ENCODE measurements at regions of chr2 and their contacts with region 1.

Region 1: GRCh38 chr2:151828143-151828889 is at the start of gene ARL5A:
- DNase-seq: peak; percentile 79 to 98
- H3K4me3 ChIP-seq: peak within 1 kb of the TSS; percentile 96
- H3K27ac ChIP-seq: peak within 1 kb of the TSS; percentile 89 to 96
- H3K4me1 ChIP-seq: peaks cover 0 to 13% of the 10 kb centered on the region in 2 donors
- H3K27me3 ChIP-seq: no peaks in the 10 kb centered on the region
- CTCF ChIP-seq: no peak
- total RNA-seq, gene ARL5A: 15.8 TPM

Region 2: GRCh38 chr2:151774506-151774905 is 53.8 kb before region 1 on chr2:
- intact Hi-C with region 1: loop called (anchors 2 kb)
- DNase-seq: no peak
- H3K4me3 ChIP-seq: no peak overlapping the region
- H3K27ac ChIP-seq: peak overlapping the region; percentile 38 to 70
- H3K4me1 ChIP-seq: peaks cover 0 to 4% of the 10 kb centered on the region in 2 donors
- H3K27me3 ChIP-seq: no peaks in the 10 kb centered on the region
- CTCF ChIP-seq: no peak

Region 3: DNA sequence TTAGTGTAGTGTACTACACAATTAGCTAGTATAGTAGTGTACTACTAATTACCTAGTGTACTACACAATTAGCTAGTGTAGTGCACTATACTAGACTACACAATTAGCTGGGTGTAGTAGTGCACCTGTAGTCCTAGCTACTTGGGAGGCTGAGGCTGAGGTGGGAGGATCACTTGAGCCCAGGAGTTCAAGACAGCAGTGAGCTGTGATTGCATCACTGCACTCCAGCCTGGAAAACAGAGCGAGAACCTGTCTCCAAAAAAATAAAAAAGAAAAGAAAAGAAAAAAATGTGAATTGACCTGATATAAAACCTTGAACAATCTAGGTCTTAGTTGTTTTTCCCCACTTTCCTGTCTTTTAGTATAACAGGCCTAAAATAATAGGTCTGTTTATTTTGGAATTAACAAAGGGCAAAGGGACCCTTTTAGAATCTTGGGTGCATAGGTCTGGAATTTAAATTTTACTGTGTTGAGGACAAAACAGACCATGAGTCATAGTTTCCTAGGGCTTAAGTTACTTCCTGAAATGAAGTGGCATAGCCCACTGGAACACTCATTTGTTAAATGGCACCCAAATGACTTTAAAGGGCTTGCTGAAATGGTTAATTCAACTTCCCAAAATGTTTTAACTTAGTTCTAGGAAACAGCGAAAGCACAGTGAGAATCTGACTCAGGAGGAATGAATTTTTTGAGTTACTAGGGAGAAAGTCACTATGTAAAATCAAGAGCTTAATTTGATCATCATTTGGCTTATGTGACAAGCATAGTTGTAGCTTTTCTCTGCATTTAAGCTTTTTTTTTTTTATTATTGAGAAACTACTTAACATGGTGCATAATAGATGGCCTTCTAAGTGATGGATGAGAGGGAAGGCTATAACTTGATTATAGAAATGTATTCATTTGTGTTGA is 50.6 kb after region 1 on chr2:
- intact Hi-C with region 1: loop called (anchors 1 kb)
- DNase-seq: peak in 1 of 2 donors; percentile 65
- H3K4me3 ChIP-seq: no peak overlapping the region
- H3K27ac ChIP-seq: peak overlapping the region; percentile 51 to 68
- H3K4me1 ChIP-seq: peaks cover 0 to 27% of the 10 kb centered on the region in 2 donors
- H3K27me3 ChIP-seq: no peaks in the 10 kb centered on the region
- CTCF ChIP-seq: no peak

Region 4: DNA sequence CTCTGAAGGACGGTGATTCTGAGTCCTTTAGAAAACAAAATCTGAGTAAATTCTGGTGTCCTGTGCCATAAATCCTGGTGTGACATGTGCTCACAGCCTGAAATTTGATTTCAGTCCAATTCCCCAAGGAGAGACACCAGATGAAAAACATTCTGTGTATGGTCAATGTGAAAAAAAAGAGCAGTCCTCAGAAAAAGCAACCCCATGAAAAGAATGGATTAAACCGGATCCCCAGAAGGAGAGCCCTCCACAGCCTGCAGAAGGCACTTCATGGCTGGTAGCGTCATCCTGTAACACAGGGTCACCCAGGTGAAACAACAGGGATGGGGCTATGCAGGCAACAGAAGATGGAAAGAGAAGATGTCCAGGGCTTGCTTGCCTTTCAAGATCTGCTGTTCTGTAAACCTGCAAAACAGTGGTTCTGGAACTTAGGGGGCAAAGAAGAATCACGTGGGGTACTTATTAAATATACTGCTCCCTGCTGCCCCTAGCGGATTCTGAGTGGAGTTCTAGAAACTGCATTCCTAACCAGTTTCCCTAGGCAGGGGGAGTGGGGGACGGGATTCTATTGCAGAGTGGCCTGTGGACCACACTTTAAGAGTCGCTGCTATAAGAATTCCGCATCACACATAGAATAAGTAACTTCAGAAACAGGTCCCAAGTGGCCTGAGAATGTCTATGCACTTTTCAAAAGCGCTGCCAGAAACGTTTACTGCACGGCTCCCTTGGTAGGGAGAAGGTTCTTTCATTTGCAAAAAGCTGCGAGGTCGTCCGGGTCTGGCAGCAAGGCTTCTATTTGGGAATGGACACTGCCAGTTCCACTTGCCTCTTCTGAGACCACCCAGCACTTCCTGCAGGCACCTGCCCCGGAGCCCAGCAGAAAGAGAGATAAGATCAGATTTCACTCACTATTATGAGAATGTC is 118.8 kb after region 1 on chr2:
- intact Hi-C with region 1: loop called (anchors 2 kb)
- DNase-seq: peak in 1 of 2 donors; percentile 72
- H3K4me3 ChIP-seq: peak overlapping the region; percentile 51 to 53
- H3K27ac ChIP-seq: peak overlapping the region; percentile 69 to 70
- H3K4me1 ChIP-seq: peaks cover 0 to 12% of the 10 kb centered on the region in 2 donors
- H3K27me3 ChIP-seq: no peaks in the 10 kb centered on the region
- CTCF ChIP-seq: peak; percentile 53 to 70 (median 56)

Region 5: GRCh38 chr2:151999053-151999452 is 170.7 kb after region 1 on chr2:
- intact Hi-C with region 1: loop called (anchors 5 kb)
- DNase-seq: no peak
- H3K4me3 ChIP-seq: no peak overlapping the region
- H3K27ac ChIP-seq: no peak overlapping the region
- H3K4me1 ChIP-seq: peaks cover 7 to 12% of the 10 kb centered on the region in 2 donors
- H3K27me3 ChIP-seq: no peaks in the 10 kb centered on the region
- CTCF ChIP-seq: peak; percentile 13 to 60 (median 52)

Region 6: GRCh38 chr2:152175458-152176325 is 347.4 kb after region 1 on chr2 and contains the start of gene STAM2:
- intact Hi-C with region 1: loop called (anchors 10 kb)
- DNase-seq: peak; percentile 64 to 96
- H3K4me3 ChIP-seq: peak within 1 kb of the TSS; percentile 75 to 99
- H3K27ac ChIP-seq: peak within 1 kb of the TSS; percentile 92 to 99
- H3K4me1 ChIP-seq: peaks cover 3 to 15% of the 10 kb centered on the region in 2 donors
- H3K27me3 ChIP-seq: no peaks in the 10 kb centered on the region
- CTCF ChIP-seq: peak; percentile 93 to 98 (median 94)
- total RNA-seq, gene STAM2: 4.0 TPM